ENCODE measurements at regions of chr16 and their contacts with region 1.

Region 1: DNA sequence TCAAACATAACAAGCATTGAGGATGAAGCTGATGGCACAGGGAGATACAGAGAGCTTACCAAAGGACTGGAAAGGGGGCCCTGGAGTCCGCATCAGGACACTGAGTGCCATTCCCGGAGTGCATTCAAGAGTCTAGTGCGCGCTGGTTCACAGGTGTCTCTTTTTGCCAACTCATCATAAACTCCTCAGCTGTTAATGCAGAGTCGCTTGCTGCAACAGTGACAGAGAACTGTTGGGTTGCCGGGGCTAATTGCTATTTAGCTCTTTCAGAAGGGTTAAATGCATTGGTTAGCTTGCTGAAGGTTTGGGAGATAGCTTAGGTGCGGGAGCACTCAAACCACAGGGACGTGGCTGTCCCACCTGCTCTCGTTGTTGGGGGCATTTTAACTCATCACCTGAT is 1091.6 kb upstream of the EEF2KMT start:
- DNase-seq: no peak
- H3K4me3 ChIP-seq: no peak overlapping the region
- H3K27ac ChIP-seq: no peak overlapping the region
- H3K4me1 ChIP-seq: no peaks in the 10 kb centered on the region
- H3K27me3 ChIP-seq: no peaks in the 10 kb centered on the region

Region 2: GRCh38 chr16:6247775-6248174 is 58.6 kb after region 1 on chr16:
- in situ Hi-C with region 1: loop called (anchors 10 kb)
- DNase-seq: no peak
- H3K4me3 ChIP-seq: no peak overlapping the region
- H3K27ac ChIP-seq: no peak overlapping the region
- H3K4me1 ChIP-seq: no peaks in the 10 kb centered on the region
- H3K27me3 ChIP-seq: no peaks in the 10 kb centered on the region

Measured in GM23248 (cell line).